ENCODE measurements at regions of chr1 and their contacts with region 1.

Region 1: GRCh38 chr1:219066631-219067349 is 106.9 kb upstream of the LYPLAL1 start:
- DNase-seq: no peak
- ATAC-seq: peak in 3 of 4 donors; percentile 34 to 55 (median 55)
- H3K4me3 ChIP-seq: no peak overlapping the region
- H3K27ac ChIP-seq: peak overlapping the region in 3 of 12 donors; percentile 6 to 25 (median 8)
- H3K4me1 ChIP-seq: peaks cover 0 to 14% (median 1%) of the 10 kb centered on the region in 12 donors
- H3K27me3 ChIP-seq: no peaks in the 10 kb centered on the region
- CTCF ChIP-seq: peak; percentile 31 to 70 (median 56)
- POLR2A ChIP-seq: no peak

Region 2: DNA sequence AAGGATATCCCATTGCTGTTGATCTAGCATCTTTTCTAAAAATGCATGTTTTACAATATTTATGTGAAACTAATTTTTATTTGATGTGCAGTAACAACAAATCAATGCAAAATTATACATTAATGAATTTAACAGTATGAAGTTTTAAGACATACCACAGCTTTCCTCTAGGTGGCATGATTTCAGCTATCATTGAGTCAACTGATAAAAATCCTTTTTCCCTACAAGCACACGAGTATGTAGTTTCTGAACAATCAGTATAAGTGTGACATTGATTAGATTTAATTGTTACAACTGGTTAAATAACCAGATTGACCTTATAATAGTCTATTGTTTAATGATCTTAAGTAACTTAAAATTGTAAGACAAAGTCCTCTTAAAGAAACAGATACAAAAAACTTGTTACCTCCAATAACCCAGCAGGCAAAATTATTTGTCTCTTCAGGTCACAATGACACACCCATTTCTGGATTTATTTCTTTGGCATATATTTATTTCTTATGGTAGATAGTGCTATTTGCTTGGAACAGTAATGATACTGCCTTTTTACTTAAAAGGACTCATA is 727.4 kb before region 1 on chr1:
- intact Hi-C with region 1: loop called in 9 of 10 experiments (anchors 5 kb)
- DNase-seq: no peak
- ATAC-seq: no peak
- H3K4me3 ChIP-seq: no peak overlapping the region
- H3K27ac ChIP-seq: no peak overlapping the region
- H3K4me1 ChIP-seq: peaks cover 0 to 6% (median 0%) of the 10 kb centered on the region in 12 donors
- H3K27me3 ChIP-seq: no peaks in the 10 kb centered on the region
- CTCF ChIP-seq: peak; percentile 55 to 83 (median 77)
- POLR2A ChIP-seq: no peak

Region 3: DNA sequence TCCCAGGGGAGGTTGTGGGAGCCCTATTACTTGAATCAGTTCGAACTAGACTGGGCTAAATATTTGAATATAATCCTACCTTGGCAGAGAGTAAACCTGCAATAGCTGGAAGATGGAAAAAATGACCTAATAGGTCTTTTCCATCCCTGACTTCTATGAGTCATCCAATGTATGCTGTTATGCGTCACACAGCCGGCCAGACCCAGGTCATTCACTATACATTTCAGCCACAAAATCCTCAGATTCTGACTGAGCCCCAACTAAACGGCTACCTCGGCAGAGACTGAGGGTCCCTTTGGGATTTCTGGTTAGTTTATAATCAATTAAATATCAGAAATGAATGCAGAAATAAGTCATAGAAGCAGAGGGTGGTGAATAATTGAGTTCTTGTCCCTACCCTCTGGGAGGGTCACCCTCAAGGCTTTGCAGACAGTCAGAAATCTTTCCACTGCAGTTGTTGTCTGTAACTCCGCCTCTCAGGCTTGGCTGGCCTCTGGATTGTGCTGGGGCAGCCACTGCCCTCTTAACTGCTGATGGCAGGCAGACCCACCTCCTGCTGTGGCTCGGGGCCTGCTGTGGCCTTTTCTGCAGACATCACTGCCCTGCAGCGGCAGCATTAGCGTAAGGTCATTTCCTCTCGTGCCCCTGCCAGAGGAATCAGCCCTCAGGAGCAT is 481.1 kb before region 1 on chr1:
- intact Hi-C with region 1: loop called in 1 of 10 experiments (anchors 10 kb)
- DNase-seq: peak in 3 of 5 donors; percentile 12 to 27 (median 18)
- ATAC-seq: peak in 3 of 4 donors; percentile 33 to 44 (median 42)
- H3K4me3 ChIP-seq: no peak overlapping the region
- H3K27ac ChIP-seq: no peak overlapping the region
- H3K4me1 ChIP-seq: peaks cover 0 to 24% (median 5%) of the 10 kb centered on the region in 12 donors
- H3K27me3 ChIP-seq: no peaks in the 10 kb centered on the region
- CTCF ChIP-seq: no peak
- POLR2A ChIP-seq: no peak